ENCODE measurements at regions of chr3 and their contacts with region 1.

Region 1: DNA sequence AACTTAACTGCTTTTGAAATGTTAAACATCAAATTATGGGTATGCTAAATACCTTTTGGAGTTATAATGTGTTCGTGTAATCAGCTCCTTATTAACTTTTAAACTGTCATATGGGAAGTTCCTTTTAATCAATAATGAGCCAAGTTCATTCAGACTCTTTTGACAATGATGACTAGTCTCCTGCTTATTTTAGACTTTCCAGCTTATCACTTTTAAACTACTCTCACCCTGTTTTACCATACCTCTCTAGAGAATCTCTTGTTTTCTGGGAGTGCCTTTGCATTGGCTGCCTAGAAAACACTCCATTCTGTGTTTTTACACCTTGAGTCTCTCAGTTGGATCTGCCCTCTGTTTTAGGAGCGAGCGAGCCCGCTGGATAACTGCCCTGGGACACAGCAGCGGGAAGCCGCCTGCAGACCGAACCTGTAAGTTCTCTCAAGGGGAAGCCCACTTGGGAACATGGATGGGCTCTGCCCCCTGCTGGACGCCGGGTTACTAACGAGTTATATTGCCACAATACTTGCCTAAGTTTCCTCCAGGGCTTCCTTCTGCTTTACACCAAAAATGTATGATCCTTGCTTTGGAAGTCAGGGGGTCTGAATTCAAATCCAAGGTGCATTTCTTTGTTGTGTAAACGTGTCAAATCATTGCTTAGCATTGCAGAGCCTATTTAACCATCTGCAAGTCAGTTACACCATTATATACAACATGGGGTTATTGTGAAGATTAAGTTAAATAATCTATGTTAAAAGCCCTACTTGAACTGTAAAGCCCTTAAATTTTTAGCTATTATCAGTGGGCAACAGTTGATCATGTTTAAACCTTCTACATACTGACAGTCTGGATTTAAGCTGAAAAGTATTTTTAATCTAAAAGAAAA is 71.3 kb downstream of the DHX36 start:
- DNase-seq: peak; percentile 90
- H3K4me3 ChIP-seq: no peak overlapping the region
- H3K27ac ChIP-seq: no peak overlapping the region
- H3K4me1 ChIP-seq: no peaks in the 10 kb centered on the region
- H3K27me3 ChIP-seq: no peaks in the 10 kb centered on the region
- CTCF ChIP-seq: peak; percentile 87 to 89
- POLR2A ChIP-seq: no peak

Region 2: DNA sequence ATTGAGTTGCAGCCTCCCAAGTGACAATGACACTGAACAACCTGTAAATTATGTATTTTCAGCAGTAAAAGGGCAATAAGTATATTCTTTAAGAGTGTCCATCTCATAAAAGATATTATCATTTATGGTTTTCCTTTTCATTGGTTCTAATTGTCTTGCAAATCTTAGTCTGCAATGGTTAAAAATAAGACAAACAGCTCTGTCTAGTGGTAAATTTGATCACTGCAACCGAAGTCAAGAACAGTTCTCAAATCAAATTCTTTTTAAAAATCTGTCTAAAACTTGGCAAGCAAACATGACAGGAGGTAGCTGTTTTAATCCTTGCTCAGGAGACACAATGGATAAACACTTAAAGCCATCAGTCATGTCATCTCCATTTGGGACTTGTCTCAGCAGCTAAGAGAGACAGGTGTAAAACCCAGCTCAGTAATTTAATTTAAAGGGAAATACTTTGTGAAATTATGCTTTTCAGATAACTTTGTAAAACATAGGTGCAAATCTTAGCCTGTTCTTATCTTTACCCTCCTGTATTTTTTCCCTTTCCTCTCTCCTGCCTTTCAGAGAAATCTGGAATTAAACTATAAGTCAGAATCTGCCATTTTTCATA is 282.2 kb before region 1 on chr3:
- CTCF ChIA-PET with region 1: interaction called, 13 read pairs
- POLR2A ChIA-PET with region 1: no interaction called
- dilution Hi-C with region 1: no loop called
- intact Hi-C with region 1: no loop called
- DNase-seq: peak; percentile 64
- H3K4me3 ChIP-seq: no peak overlapping the region
- H3K27ac ChIP-seq: no peak overlapping the region
- H3K4me1 ChIP-seq: no peaks in the 10 kb centered on the region
- H3K27me3 ChIP-seq: no peaks in the 10 kb centered on the region
- CTCF ChIP-seq: peak; percentile 23 to 33
- POLR2A ChIP-seq: no peak

Region 3: GRCh38 chr3:154040286-154040685 is 212.7 kb before region 1 on chr3:
- CTCF ChIA-PET with region 1: interaction called, 19 read pairs
- POLR2A ChIA-PET with region 1: no interaction called
- dilution Hi-C with region 1: no loop called
- intact Hi-C with region 1: loop called (anchors 1 kb)
- DNase-seq: peak; percentile 23
- H3K4me3 ChIP-seq: no peak overlapping the region
- H3K27ac ChIP-seq: no peak overlapping the region
- H3K4me1 ChIP-seq: no peaks in the 10 kb centered on the region
- H3K27me3 ChIP-seq: peaks cover 2 to 10% of the 10 kb centered on the region in 2 experiments
- CTCF ChIP-seq: peak; percentile 13 to 30
- POLR2A ChIP-seq: no peak

Region 4: GRCh38 chr3:154089452-154090420 is 163.3 kb before region 1 on chr3:
- CTCF ChIA-PET with region 1: interaction called, 12 read pairs
- POLR2A ChIA-PET with region 1: no interaction called
- dilution Hi-C with region 1: no loop called
- intact Hi-C with region 1: no loop called
- DNase-seq: peak; percentile 67
- H3K4me3 ChIP-seq: no peak overlapping the region
- H3K27ac ChIP-seq: no peak overlapping the region
- H3K4me1 ChIP-seq: no peaks in the 10 kb centered on the region
- H3K27me3 ChIP-seq: peaks cover 0 to 2% of the 10 kb centered on the region in 2 experiments
- CTCF ChIP-seq: no peak
- POLR2A ChIP-seq: no peak

Region 5: DNA sequence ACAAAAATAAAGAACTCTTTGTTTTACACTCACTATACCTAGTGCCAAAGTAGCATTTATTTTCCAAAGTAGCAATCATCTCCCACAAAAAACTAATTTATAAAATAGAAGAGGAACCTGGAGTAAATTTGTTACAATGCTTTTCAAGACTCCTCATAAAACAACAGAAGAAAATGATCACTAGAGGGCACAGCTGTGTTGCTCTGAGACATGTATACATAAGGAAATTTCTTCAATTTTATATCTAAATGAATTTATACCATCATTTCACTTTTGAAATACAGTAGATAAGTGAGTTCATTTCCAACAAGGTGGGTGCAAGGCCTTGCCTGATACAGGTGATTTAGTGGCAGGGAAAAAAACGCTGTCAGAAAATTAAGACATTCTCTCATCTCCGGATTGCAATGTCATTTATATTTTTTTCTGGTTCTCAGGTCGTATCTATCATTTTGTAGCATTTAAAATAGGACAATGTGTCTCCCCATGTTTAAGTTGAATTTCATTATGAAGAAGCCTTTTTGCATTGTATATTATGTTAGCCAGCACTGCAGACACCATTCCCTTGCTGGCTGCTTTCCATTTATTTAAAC is 157.1 kb before region 1 on chr3:
- CTCF ChIA-PET with region 1: interaction called, 26 read pairs
- POLR2A ChIA-PET with region 1: no interaction called
- dilution Hi-C with region 1: no loop called
- intact Hi-C with region 1: loop called (anchors 1 kb)
- DNase-seq: peak; percentile 42
- H3K4me3 ChIP-seq: no peak overlapping the region
- H3K27ac ChIP-seq: no peak overlapping the region
- H3K4me1 ChIP-seq: no peaks in the 10 kb centered on the region
- H3K27me3 ChIP-seq: peaks cover 0 to 3% of the 10 kb centered on the region in 2 experiments
- CTCF ChIP-seq: peak in 1 of 2 donors; percentile 23
- POLR2A ChIP-seq: no peak

Region 6: GRCh38 chr3:154120961-154121700 is 131.9 kb before region 1 on chr3 and contains the start of gene ARHGEF26:
- CTCF ChIA-PET with region 1: interaction called, 22 read pairs
- POLR2A ChIA-PET with region 1: no interaction called
- dilution Hi-C with region 1: no loop called
- intact Hi-C with region 1: loop called (anchors 10 kb)
- DNase-seq: peak; percentile 84
- H3K4me3 ChIP-seq: peak within 1 kb of the TSS; percentile 35 to 68 (median 54)
- H3K27ac ChIP-seq: no peak within 1 kb of the TSS
- H3K4me1 ChIP-seq: peaks cover 3% of the 10 kb centered on the region
- H3K27me3 ChIP-seq: no peaks in the 10 kb centered on the region
- CTCF ChIP-seq: no peak
- POLR2A ChIP-seq: no peak
- total RNA-seq, gene ARHGEF26: 2.2 and 2.9 TPM in 2 replicates

Measured in endothelial cell of umbilical vein (primary cell).